Heart right ventricle (tissue), 16 donors: ENCODE measurements at regions of chr16 and their contacts with region 1.

Region 1: GRCh38 chr16:48231727-48232492 is 12.2 kb upstream of the LONP2 start:
- DNase-seq: peak in 1 of 2 donors; percentile 10
- ATAC-seq: peak in 5 of 8 donors; percentile 28 to 61 (median 41)
- H3K4me3 ChIP-seq: no peak overlapping the region
- H3K27ac ChIP-seq: no peak overlapping the region
- H3K4me1 ChIP-seq: peaks cover 0 to 8% (median 0%) of the 10 kb centered on the region in 9 donors
- H3K27me3 ChIP-seq: no peaks in the 10 kb centered on the region
- CTCF ChIP-seq: peak in 7 of 9 donors; percentile 27 to 53 (median 36)

Region 2: GRCh38 chr16:48276102-48276501 is 44.2 kb after region 1 on chr16:
- intact Hi-C with region 1: no loop called
- DNase-seq: no peak
- ATAC-seq: peak in 4 of 8 donors; percentile 26 to 60 (median 44)
- H3K4me3 ChIP-seq: no peak overlapping the region
- H3K27ac ChIP-seq: peak overlapping the region in 4 of 10 donors; percentile 27 to 67 (median 50)
- H3K4me1 ChIP-seq: peaks cover 8 to 74% (median 59%) of the 10 kb centered on the region in 9 donors
- H3K27me3 ChIP-seq: no peaks in the 10 kb centered on the region
- CTCF ChIP-seq: no peak

Region 3: GRCh38 chr16:48318630-48319029 is 86.7 kb after region 1 on chr16:
- intact Hi-C with region 1: no loop called
- DNase-seq: peak in 1 of 2 donors; percentile 74
- ATAC-seq: peak; percentile 69 to 93 (median 90)
- H3K4me3 ChIP-seq: peak overlapping the region in 1 of 10 donors; percentile 2
- H3K27ac ChIP-seq: peak overlapping the region in 8 of 10 donors; percentile 56 to 84 (median 72)
- H3K4me1 ChIP-seq: peaks cover 3 to 55% (median 33%) of the 10 kb centered on the region in 9 donors
- H3K27me3 ChIP-seq: no peaks in the 10 kb centered on the region
- CTCF ChIP-seq: no peak

Region 4: GRCh38 chr16:48632137-48632774 is 400.3 kb after region 1 on chr16:
- intact Hi-C with region 1: loop called in 5 of 10 experiments (anchors 5 to 10 kb)
- DNase-seq: no peak
- ATAC-seq: no peak
- H3K4me3 ChIP-seq: no peak overlapping the region
- H3K27ac ChIP-seq: no peak overlapping the region
- H3K4me1 ChIP-seq: peaks cover 0 to 11% (median 3%) of the 10 kb centered on the region in 9 donors
- H3K27me3 ChIP-seq: no peaks in the 10 kb centered on the region
- CTCF ChIP-seq: no peak